ENCODE measurements at regions of chr17 and their contacts with region 1.

Region 1: GRCh38 chr17:68533887-68534694 is 21.9 kb downstream of the PRKAR1A start:
- DNase-seq: no peak
- H3K4me3 ChIP-seq: no peak overlapping the region
- H3K4me3 Mint-ChIP-seq: no peak overlapping the region
- H3K27ac Mint-ChIP-seq: no peak overlapping the region
- H3K4me1 ChIP-seq: no peaks in the 10 kb centered on the region
- H3K4me1 Mint-ChIP-seq: no peaks in the 10 kb centered on the region
- H3K27me3 ChIP-seq: no peaks in the 10 kb centered on the region
- H3K27me3 Mint-ChIP-seq: no peaks in the 10 kb centered on the region
- CTCF ChIP-seq: peak in 1 of 2 experiments; percentile 49

Region 2: GRCh38 chr17:68544111-68544915 is 10.2 kb after region 1 on chr17:
- CTCF ChIA-PET with region 1: no interaction called
- POLR2A ChIA-PET with region 1: no interaction called
- intact Hi-C with region 1: no loop called
- DNase-seq: no peak
- H3K4me3 ChIP-seq: no peak overlapping the region
- H3K4me3 Mint-ChIP-seq: no peak overlapping the region
- H3K27ac Mint-ChIP-seq: no peak overlapping the region
- H3K4me1 ChIP-seq: no peaks in the 10 kb centered on the region
- H3K4me1 Mint-ChIP-seq: peaks cover 6% of the 10 kb centered on the region
- H3K27me3 ChIP-seq: no peaks in the 10 kb centered on the region
- H3K27me3 Mint-ChIP-seq: no peaks in the 10 kb centered on the region
- CTCF ChIP-seq: no peak

Region 3: DNA sequence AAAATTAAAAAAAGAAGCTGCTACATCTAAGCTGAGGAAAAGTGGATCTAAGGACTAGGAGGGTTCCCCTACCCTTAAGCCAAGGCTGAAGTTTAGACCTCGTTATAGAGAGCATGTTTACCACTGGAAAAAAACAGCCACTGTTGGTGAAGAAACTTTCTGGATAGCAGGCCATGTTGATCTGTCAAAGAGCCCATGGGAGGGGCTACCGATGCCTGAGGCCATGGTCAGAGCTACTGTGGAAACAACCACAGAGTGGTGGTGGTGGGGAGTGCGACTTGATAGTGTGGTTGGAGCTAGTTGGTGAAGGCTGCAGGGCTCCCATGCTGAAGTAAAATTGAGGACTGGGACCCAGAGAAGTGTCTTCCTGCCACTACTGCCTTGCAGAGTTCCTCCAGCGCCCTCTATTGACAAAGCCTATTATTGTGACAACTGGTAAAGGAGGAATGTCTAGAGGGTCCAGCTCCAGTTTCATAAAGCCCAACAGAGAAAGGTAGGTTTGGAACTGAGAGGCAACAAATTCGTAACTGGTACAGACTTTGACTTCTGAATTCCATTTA is 79.7 kb after region 1 on chr17:
- CTCF ChIA-PET with region 1: interaction called, 4 read pairs
- POLR2A ChIA-PET with region 1: no interaction called
- intact Hi-C with region 1: loop called (anchors 1 kb)
- DNase-seq: peak; percentile 64 to 79
- H3K4me3 ChIP-seq: no peak overlapping the region
- H3K4me3 Mint-ChIP-seq: no peak overlapping the region
- H3K27ac Mint-ChIP-seq: no peak overlapping the region
- H3K4me1 ChIP-seq: no peaks in the 10 kb centered on the region
- H3K4me1 Mint-ChIP-seq: no peaks in the 10 kb centered on the region
- H3K27me3 ChIP-seq: no peaks in the 10 kb centered on the region; the same call in 1 of the 2 replicates
- H3K27me3 Mint-ChIP-seq: peaks cover 4% of the 10 kb centered on the region
- CTCF ChIP-seq: peak; percentile 61 to 63

Region 4: DNA sequence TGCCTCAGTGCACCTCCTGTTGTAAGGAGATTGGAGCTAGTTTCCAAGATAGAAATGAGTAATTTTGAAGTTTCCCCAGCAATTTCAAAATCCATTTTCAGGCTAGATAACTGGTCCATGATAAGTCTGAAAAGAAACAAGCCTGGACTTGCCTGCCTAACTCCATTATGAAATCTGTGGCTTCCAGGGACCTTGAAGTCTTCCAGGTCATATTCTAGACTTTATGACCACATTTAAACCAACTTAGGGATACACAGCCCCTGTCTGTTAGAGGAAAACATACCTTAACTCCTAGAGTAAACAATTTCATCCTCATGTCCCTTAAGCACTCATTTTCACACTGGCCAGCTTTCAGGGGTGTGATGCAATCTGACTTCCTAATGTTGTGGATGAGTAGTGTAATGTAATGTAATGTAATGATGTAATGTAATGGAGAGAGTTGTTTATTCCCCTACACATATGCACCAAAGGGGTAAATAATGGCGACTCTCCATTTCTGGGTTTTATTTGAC is 163.8 kb after region 1 on chr17:
- CTCF ChIA-PET with region 1: interaction called, 12 read pairs
- POLR2A ChIA-PET with region 1: no interaction called
- intact Hi-C with region 1: no loop called
- DNase-seq: peak; percentile 24 to 56
- H3K4me3 ChIP-seq: no peak overlapping the region
- H3K4me3 Mint-ChIP-seq: no peak overlapping the region
- H3K27ac Mint-ChIP-seq: no peak overlapping the region
- H3K4me1 ChIP-seq: peaks cover 41% of the 10 kb centered on the region
- H3K4me1 Mint-ChIP-seq: peaks cover 22% of the 10 kb centered on the region
- H3K27me3 ChIP-seq: no peaks in the 10 kb centered on the region
- H3K27me3 Mint-ChIP-seq: no peaks in the 10 kb centered on the region
- CTCF ChIP-seq: no peak

Measured in Caco-2 (cell line).